Ascending aorta (tissue), 2 donors: ENCODE measurements at regions of chr4 and their contacts with region 1.

Region 1: GRCh38 chr4:129641179-129641578 is 545.2 kb downstream of the C4orf33 start:
- DNase-seq: peak in 1 of 2 donors; percentile 67
- H3K4me3 ChIP-seq: no peak overlapping the region
- H3K27ac ChIP-seq: no peak overlapping the region
- H3K4me1 ChIP-seq: no peaks in the 10 kb centered on the region
- H3K27me3 ChIP-seq: no peaks in the 10 kb centered on the region
- CTCF ChIP-seq: peak; percentile 26 to 75 (median 63)

Region 2: GRCh38 chr4:129218360-129218759 is 422.8 kb before region 1 on chr4:
- intact Hi-C with region 1: loop called (anchors 1 kb)
- DNase-seq: no peak
- H3K4me3 ChIP-seq: peak overlapping the region in 1 of 2 donors; percentile 19
- H3K27ac ChIP-seq: no peak overlapping the region
- H3K4me1 ChIP-seq: no peaks in the 10 kb centered on the region
- H3K27me3 ChIP-seq: no peaks in the 10 kb centered on the region
- CTCF ChIP-seq: peak in 1 of 3 experiments; percentile 54

Region 3: GRCh38 chr4:129362674-129363274 is 278.4 kb before region 1 on chr4:
- intact Hi-C with region 1: loop called (anchors 1 kb)
- DNase-seq: peak in 1 of 2 donors; percentile 72
- H3K4me3 ChIP-seq: no peak overlapping the region
- H3K27ac ChIP-seq: no peak overlapping the region
- H3K4me1 ChIP-seq: peaks cover 0 to 4% of the 10 kb centered on the region in 2 donors
- H3K27me3 ChIP-seq: no peaks in the 10 kb centered on the region
- CTCF ChIP-seq: peak; percentile 42 to 82 (median 66)